ENCODE measurements at regions of chr5 and their contacts with region 1.

Region 1: DNA sequence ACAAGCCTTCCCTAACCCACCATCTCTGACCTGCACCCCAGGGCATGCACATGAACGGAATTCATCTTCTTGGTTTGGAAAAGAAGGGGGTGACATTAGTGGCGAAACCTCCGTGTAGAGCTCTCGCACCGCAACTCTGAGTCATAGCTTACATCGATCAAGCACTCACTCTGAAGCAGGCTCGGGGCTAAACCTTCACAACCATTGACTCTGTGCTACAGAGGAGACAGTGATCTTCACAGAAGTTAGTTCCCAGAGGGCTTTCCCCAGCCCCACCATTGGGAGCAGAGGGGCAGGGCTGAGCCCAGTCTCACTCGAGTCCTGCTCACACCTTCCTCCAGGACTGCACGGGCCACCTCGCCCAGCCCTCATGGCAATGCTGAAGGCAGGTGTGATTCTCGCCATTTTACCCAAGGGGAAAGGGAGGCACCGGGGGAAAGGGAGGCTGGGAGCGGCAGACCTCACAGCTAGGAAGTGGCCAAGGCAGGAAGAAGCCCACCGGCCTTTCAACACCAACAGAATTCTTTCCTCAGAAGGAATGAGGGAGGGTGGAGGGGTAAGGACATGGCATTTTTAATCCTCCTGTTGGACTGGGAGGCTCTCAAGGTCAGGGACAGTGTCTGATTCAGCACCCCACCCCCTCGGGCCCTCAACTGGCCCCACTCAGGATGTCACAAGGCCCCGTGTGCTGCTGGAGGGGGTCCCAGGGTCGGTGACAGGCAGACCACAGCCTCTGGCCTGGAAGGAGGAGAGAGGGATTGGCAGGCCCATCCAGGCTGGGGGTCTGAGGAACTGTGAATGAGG is 25.9 kb upstream of the IL17B start:
- DNase-seq: no peak
- H3K4me3 ChIP-seq: peak overlapping the region; percentile 39 to 77 (median 66)
- H3K27ac ChIP-seq: peak overlapping the region; percentile 94 to 98 (median 96)
- H3K4me1 ChIP-seq: peaks cover 14 to 40% (median 40%) of the 10 kb centered on the region in 4 donors
- H3K27me3 ChIP-seq: no peaks in the 10 kb centered on the region
- CTCF ChIP-seq: no peak
- EP300 ChIP-seq: no peak
- POLR2A ChIP-seq: no peak

Region 2: GRCh38 chr5:149387081-149387631 is 17.8 kb before region 1 on chr5:
- intact Hi-C with region 1: loop called (anchors 2 kb)
- DNase-seq: no peak
- H3K4me3 ChIP-seq: peak overlapping the region in 3 of 4 donors; percentile 0 to 33 (median 20)
- H3K27ac ChIP-seq: peak overlapping the region; percentile 92 to 97 (median 96)
- H3K4me1 ChIP-seq: peaks cover 72 to 100% (median 94%) of the 10 kb centered on the region in 4 donors
- H3K27me3 ChIP-seq: no peaks in the 10 kb centered on the region
- CTCF ChIP-seq: no peak
- EP300 ChIP-seq: peak; percentile 86
- POLR2A ChIP-seq: no peak